ENCODE measurements at regions of chr20 and their contacts with region 1.

Region 1: DNA sequence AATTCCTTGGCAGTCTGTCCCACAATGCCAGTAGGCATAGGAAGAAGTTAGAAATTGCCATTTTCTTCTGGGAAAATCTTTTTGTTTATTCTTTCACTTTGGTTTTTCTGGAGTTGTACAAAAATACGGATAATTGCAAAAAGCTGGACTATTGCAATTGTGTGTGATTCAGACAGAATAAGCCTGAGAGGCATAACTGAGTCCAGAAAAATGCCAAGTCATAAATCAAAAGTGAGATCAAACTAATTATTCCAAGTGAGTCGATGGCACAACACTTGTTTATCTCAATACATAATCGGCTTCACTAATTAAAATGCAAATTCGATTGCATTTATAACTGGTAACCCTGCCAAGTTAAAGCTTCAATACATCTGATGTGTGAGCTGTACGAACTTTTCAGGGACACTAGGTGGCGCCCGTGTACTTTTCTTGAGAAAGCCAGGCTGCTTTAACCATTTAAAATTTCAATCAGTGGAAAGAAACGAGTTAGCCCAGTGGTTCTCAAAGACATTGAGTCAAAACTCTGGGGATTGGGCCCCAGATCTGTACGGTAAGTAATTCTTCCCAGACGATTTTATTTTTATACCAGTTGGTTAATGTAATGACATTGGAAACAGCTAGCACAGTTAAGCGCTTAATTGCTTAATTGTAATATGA is 102.6 kb downstream of the LAMP5 start:
- DNase-seq: peak; percentile 89
- ATAC-seq: peak; percentile 74
- H3K4me3 ChIP-seq: peak overlapping the region; percentile 28
- H3K27ac ChIP-seq: no peak overlapping the region
- H3K4me1 ChIP-seq: no peaks in the 10 kb centered on the region; the same call in 1 of the 2 replicates
- H3K27me3 ChIP-seq: peaks cover 12% of the 10 kb centered on the region; the same call in 1 of the 2 replicates
- CTCF ChIP-seq: peak; percentile 97

Region 2: DNA sequence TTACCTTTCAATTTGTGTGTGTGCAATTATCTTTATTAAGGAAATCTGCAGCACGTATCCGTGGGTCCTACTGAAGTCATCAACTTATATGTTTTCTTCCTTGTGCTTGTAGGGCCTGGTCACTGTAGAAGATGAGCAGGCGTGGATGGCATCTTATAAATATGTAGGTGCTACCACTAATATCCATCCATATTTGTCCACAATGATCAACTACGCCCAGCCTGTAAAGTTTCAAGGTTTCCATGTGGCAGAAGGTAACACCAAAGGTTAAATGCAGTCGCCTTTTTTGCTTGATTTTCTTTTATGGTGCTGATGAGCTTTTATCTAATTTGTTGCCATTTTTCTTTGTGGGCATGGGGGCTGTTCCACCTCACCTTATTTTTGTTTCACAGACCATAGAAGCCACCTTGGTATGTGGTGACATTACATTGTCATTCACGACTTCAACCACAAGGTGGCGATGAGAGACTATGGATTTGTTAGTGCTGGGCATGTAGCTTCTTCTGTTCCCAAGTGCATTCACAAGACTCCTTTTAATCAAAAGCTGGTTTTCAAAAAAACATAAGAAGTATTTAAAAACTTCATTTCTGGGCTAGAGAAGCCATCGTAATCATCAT is 209.0 kb before region 1 on chr20:
- CTCF ChIA-PET with region 1: interaction called, 25 read pairs
- POLR2A ChIA-PET with region 1: no interaction called
- intact Hi-C with region 1: no loop called
- DNase-seq: peak; percentile 92
- ATAC-seq: peak; percentile 82
- H3K4me3 ChIP-seq: no peak overlapping the region
- H3K27ac ChIP-seq: peak overlapping the region; percentile 73; the same call in 1 of the 2 replicates
- H3K4me1 ChIP-seq: peaks cover 25% of the 10 kb centered on the region
- H3K27me3 ChIP-seq: no peaks in the 10 kb centered on the region
- CTCF ChIP-seq: peak; percentile 95

Region 3: DNA sequence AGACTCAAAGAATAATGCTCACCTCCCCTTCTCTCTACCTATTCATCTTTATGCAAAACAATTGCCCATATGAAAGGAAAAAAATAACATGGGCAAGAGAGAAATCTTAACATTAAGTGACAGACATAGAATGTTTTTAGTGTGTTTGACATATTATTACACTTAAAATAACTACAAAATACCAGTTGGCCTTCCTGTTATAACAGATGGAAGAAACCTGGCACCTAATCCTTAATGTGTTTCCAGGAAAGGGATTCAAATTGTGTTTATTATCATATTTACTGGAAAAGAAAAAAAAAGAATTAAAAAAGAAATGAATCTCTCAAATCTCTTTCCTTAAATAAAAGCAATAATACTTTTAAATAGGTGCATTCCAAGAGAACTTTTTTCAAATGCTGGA is 56.0 kb after region 1 on chr20:
- CTCF ChIA-PET with region 1: no interaction called
- POLR2A ChIA-PET with region 1: no interaction called
- intact Hi-C with region 1: no loop called
- DNase-seq: no peak
- ATAC-seq: no peak
- H3K4me3 ChIP-seq: no peak overlapping the region
- H3K27ac ChIP-seq: no peak overlapping the region
- H3K4me1 ChIP-seq: no peaks in the 10 kb centered on the region
- H3K27me3 ChIP-seq: peaks cover 3% of the 10 kb centered on the region; the same call in 1 of the 2 replicates
- CTCF ChIP-seq: no peak

Region 4: GRCh38 chr20:9884061-9884460 is 267.1 kb after region 1 on chr20:
- CTCF ChIA-PET with region 1: interaction called, 13 read pairs
- POLR2A ChIA-PET with region 1: no interaction called
- intact Hi-C with region 1: loop called (anchors 1 kb)
- DNase-seq: peak; percentile 35
- ATAC-seq: peak; percentile 82
- H3K4me3 ChIP-seq: no peak overlapping the region
- H3K27ac ChIP-seq: no peak overlapping the region
- H3K4me1 ChIP-seq: peaks cover 13% of the 10 kb centered on the region
- H3K27me3 ChIP-seq: peaks cover 25% of the 10 kb centered on the region
- CTCF ChIP-seq: peak; percentile 61

Region 5: DNA sequence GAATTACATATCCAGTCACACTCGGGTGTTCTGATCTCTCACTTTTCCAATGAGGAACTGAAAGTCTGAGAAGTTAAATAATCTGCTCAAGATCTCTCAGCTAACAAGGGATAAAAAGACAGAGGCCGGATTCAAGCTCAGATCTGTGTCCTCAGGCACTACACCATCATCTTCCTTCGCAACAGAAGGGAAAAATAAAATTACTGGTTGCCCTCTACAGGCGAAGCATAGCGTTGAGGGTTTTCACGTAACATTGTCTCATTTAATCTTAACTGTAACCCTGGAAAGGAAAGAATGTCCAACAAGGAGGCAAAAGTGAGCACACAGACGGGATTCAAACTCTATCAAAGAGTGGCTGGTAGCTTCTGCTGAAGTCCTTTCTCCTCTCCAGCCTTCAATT is 350.0 kb after region 1 on chr20:
- CTCF ChIA-PET with region 1: interaction called, 7 read pairs
- POLR2A ChIA-PET with region 1: no interaction called
- intact Hi-C with region 1: loop called (anchors 1 kb)
- DNase-seq: peak; percentile 52
- ATAC-seq: peak; percentile 57
- H3K4me3 ChIP-seq: no peak overlapping the region
- H3K27ac ChIP-seq: no peak overlapping the region
- H3K4me1 ChIP-seq: no peaks in the 10 kb centered on the region
- H3K27me3 ChIP-seq: peaks cover 43% of the 10 kb centered on the region
- CTCF ChIP-seq: peak; percentile 79

Region 6: GRCh38 chr20:10090588-10091166 is 473.7 kb after region 1 on chr20:
- CTCF ChIA-PET with region 1: interaction called, 8 read pairs
- POLR2A ChIA-PET with region 1: no interaction called
- intact Hi-C with region 1: loop called (anchors 1 kb)
- DNase-seq: peak; percentile 81
- ATAC-seq: peak; percentile 84
- H3K4me3 ChIP-seq: no peak overlapping the region
- H3K27ac ChIP-seq: no peak overlapping the region
- H3K4me1 ChIP-seq: peaks cover 19% of the 10 kb centered on the region
- H3K27me3 ChIP-seq: peaks cover 2% of the 10 kb centered on the region; the same call in 1 of the 2 replicates
- CTCF ChIP-seq: peak; percentile 93

Region 7: DNA sequence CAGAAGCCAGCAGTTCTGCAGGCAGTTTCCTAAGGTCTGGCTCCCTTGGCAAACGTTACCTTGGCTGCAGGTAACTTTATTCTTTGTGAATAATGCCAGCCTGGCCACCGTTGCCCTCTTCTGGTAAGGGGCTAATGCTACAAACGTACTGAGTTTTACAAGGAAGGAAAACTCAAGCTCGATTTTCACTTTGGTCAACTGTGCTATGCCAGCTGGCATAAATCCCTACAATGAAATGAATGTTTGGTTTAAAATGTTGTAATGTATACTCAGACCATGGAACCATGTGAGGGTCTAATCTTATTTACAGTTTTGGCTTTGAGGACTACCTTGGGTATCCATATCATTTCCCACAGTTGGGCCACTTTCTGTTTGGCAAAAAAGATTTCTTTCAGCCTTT is 919.6 kb after region 1 on chr20:
- CTCF ChIA-PET with region 1: no interaction called
- POLR2A ChIA-PET with region 1: no interaction called
- intact Hi-C with region 1: loop called (anchors 5 kb)
- DNase-seq: peak; percentile 73
- ATAC-seq: peak; percentile 25
- H3K4me3 ChIP-seq: no peak overlapping the region
- H3K27ac ChIP-seq: peak overlapping the region; percentile 19
- H3K4me1 ChIP-seq: peaks cover 41% of the 10 kb centered on the region
- H3K27me3 ChIP-seq: no peaks in the 10 kb centered on the region
- CTCF ChIP-seq: peak; percentile 77

Measured in PC-3 (cell line).